ENCODE measurements at regions of chr4 and their contacts with region 1.

Region 1: GRCh38 chr4:106369456-106370060 is 980 bp upstream of the GIMD1 start:
- DNase-seq: peak in 1 of 3 donors; percentile 71
- ATAC-seq: peak; percentile 58
- H3K4me3 ChIP-seq: no peak overlapping the region
- H3K4me1 ChIP-seq: no peaks in the 10 kb centered on the region
- CTCF ChIP-seq: peak; percentile 11

Region 2: GRCh38 chr4:106201373-106201772 is 168.2 kb before region 1 on chr4:
- intact Hi-C with region 1: no loop called
- DNase-seq: no peak
- ATAC-seq: no peak
- H3K4me3 ChIP-seq: no peak overlapping the region
- H3K4me1 ChIP-seq: no peaks in the 10 kb centered on the region
- CTCF ChIP-seq: no peak

Region 3: DNA sequence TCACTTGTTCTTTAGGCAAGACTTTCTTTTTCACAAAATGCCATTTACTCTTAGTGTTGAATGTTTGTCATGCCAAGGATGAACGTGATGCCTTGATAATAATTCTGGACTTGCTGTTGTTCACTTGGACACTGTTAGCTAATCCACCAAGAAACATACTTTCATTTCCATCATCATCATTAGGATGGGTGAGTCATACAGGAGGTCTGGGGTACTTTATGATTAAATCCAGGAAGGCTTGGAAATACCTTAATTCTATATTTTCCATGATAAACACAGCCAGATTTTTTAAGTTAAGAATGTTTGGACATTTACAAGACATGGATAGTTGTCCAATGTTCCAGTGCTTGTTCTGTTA is 259.7 kb after region 1 on chr4:
- intact Hi-C with region 1: no loop called
- DNase-seq: no peak
- ATAC-seq: no peak
- H3K4me3 ChIP-seq: no peak overlapping the region
- H3K4me1 ChIP-seq: no peaks in the 10 kb centered on the region
- CTCF ChIP-seq: no peak

Region 4: GRCh38 chr4:106809076-106809475 is 439.5 kb after region 1 on chr4:
- intact Hi-C with region 1: loop called in 1 of 2 experiments (anchors 5 kb)
- DNase-seq: peak in 1 of 3 donors; percentile 38
- ATAC-seq: peak; percentile 56
- H3K4me3 ChIP-seq: no peak overlapping the region
- H3K4me1 ChIP-seq: peaks cover 2% of the 10 kb centered on the region
- CTCF ChIP-seq: no peak